Activated CD8-positive, alpha-beta T cell treated with anti-CD3 and anti-CD28 coated beads for 36 hours (primary cell): ENCODE measurements at regions of chr9 and their contacts with region 1.

Region 1: GRCh38 chr9:4984621-4985385 is at the start of gene JAK2:
- DNase-seq: peak; percentile 90
- ATAC-seq: peak; percentile 83
- H3K4me3 Mint-ChIP-seq: no peak within 1 kb of the TSS
- H3K27ac Mint-ChIP-seq: peak within 1 kb of the TSS; percentile 91
- H3K4me1 Mint-ChIP-seq: peaks cover 42% of the 10 kb centered on the region
- H3K27me3 Mint-ChIP-seq: no peaks in the 10 kb centered on the region
- CTCF ChIP-seq: peak; percentile 28
- total RNA-seq, gene JAK2: 28.4 to 29.0 TPM

Region 2: DNA sequence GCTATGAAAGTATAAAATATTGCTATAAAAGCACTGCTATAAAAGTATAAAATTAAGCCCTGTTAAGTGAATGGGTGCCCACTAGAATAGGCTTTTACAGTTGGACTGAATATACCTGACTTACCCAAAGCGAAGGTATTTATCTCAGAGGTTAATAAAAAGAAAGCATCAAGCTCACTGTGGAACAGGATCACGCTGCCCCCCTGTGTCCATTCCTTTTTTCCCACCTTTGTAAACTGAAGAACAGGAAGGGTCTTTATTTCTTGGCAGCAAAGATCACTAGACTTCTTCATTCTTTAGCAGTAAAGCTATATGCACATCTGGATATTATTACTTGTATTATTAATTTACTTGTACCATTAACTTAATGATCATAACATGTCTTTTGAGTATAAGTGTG is 344.8 kb before region 1 on chr9:
- CTCF ChIA-PET with region 1: no interaction called
- POLR2A ChIA-PET with region 1: no interaction called
- intact Hi-C with region 1: no loop called
- DNase-seq: peak; percentile 77
- ATAC-seq: peak; percentile 39
- H3K4me3 Mint-ChIP-seq: no peak overlapping the region
- H3K27ac Mint-ChIP-seq: no peak overlapping the region
- H3K4me1 Mint-ChIP-seq: peaks cover 4% of the 10 kb centered on the region
- H3K27me3 Mint-ChIP-seq: no peaks in the 10 kb centered on the region
- CTCF ChIP-seq: peak; percentile 53

Region 3: GRCh38 chr9:4679268-4680172 is 305.3 kb before region 1 on chr9 and contains the start of gene CDC37L1:
- CTCF ChIA-PET with region 1: no interaction called
- POLR2A ChIA-PET with region 1: no interaction called
- intact Hi-C with region 1: loop called (anchors 5 kb)
- DNase-seq: peak; percentile 99
- ATAC-seq: peak; percentile 97
- H3K4me3 Mint-ChIP-seq: no peak within 1 kb of the TSS
- H3K27ac Mint-ChIP-seq: no peak within 1 kb of the TSS
- H3K4me1 Mint-ChIP-seq: peaks cover 11% of the 10 kb centered on the region
- H3K27me3 Mint-ChIP-seq: no peaks in the 10 kb centered on the region
- CTCF ChIP-seq: peak; percentile 79
- total RNA-seq, gene CDC37L1: 10.0 to 10.2 TPM

Region 4: DNA sequence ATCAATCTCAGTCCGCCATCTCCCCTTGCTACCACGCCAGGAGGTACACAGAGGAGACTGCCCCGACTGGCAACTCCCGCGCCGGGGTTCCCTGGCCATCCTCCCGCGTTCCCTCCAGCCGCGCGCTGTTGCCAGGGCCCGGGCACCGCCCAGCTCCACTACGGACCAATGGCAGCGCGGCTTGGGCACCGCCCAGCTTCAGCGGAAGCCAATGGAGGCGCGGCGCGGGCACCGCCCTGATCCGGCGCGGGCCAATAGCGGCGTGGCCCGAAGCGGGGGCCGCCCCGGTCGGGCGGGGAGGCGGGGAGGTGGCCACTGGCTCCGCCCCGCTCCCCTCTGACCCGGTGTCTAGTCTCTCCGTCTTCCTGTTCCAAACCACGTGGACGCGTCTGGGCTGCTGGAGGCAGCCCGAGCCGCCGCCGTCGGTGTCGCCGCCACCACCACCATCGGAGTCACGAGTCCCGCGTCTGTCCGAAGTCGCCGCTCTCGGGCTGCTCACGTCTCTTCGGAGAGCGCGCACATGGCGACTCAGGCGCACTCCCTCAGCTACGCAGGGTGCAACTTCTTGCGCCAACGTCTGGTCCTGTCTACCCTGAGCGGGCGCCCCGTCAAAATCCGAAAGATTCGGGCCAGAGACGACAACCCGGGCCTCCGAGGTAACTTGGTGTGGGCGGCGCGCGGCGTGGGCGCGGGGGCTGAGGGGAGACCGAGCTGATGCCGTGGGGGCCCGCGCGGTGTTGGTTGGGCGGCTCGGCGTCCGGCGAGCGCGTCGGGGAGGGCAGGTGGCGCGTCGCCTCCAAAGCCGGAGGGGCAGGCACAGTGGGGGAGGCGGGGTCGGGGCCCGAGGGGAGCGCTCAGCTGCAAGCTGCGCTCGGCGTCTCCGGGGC is 192.0 kb before region 1 on chr9 and contains the start of gene RCL1:
- CTCF ChIA-PET with region 1: interaction called, 14 read pairs
- POLR2A ChIA-PET with region 1: interaction called, 12 read pairs
- intact Hi-C with region 1: no loop called
- DNase-seq: peak; percentile 96
- ATAC-seq: peak; percentile 94
- H3K4me3 Mint-ChIP-seq: peak within 1 kb of the TSS; percentile 96
- H3K27ac Mint-ChIP-seq: peak within 1 kb of the TSS; percentile 95
- H3K4me1 Mint-ChIP-seq: peaks cover 48% of the 10 kb centered on the region
- H3K27me3 Mint-ChIP-seq: peaks cover under 1% of the 10 kb centered on the region
- CTCF ChIP-seq: no peak
- total RNA-seq, gene RCL1: 24.5 to 28.6 TPM

Region 5: DNA sequence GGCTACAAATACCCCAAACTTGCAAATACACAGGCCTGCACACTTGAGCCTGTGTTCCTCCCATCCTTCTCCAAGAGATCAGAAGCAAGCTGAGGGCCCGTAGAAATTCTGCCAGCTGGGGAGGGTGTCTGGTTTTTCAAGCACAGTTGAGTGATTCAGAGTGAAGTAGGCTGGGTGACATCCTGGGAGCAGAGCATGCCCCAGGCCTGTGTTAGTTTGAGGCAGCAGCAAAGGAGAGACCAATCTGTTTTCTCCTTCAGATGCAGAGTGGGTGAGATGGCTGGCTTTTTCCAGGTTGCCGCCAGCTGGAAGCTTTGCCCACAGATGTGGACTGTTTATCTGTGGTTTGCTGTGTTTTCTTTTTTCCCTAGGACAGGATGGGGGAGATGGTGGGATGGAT is 129.0 kb before region 1 on chr9:
- CTCF ChIA-PET with region 1: interaction called, 17 read pairs
- POLR2A ChIA-PET with region 1: no interaction called
- intact Hi-C with region 1: no loop called
- DNase-seq: no peak
- ATAC-seq: no peak
- H3K4me3 Mint-ChIP-seq: no peak overlapping the region
- H3K27ac Mint-ChIP-seq: peak overlapping the region; percentile 39
- H3K4me1 Mint-ChIP-seq: peaks cover 24% of the 10 kb centered on the region
- H3K27me3 Mint-ChIP-seq: no peaks in the 10 kb centered on the region
- CTCF ChIP-seq: no peak

Region 6: GRCh38 chr9:4933177-4933576 is 51.6 kb before region 1 on chr9:
- CTCF ChIA-PET with region 1: interaction called, 10 read pairs
- POLR2A ChIA-PET with region 1: interaction called, 17 read pairs
- intact Hi-C with region 1: no loop called
- DNase-seq: no peak
- ATAC-seq: no peak
- H3K4me3 Mint-ChIP-seq: no peak overlapping the region
- H3K27ac Mint-ChIP-seq: no peak overlapping the region
- H3K4me1 Mint-ChIP-seq: peaks cover 28% of the 10 kb centered on the region
- H3K27me3 Mint-ChIP-seq: no peaks in the 10 kb centered on the region
- CTCF ChIP-seq: no peak

Region 7: GRCh38 chr9:4970970-4971641 is 13.7 kb before region 1 on chr9:
- CTCF ChIA-PET with region 1: interaction called, 11 read pairs
- POLR2A ChIA-PET with region 1: interaction called, 26 read pairs
- intact Hi-C with region 1: loop called (anchors 2 kb)
- DNase-seq: peak; percentile 89
- ATAC-seq: peak; percentile 86
- H3K4me3 Mint-ChIP-seq: no peak overlapping the region
- H3K27ac Mint-ChIP-seq: no peak overlapping the region
- H3K4me1 Mint-ChIP-seq: peaks cover 30% of the 10 kb centered on the region
- H3K27me3 Mint-ChIP-seq: no peaks in the 10 kb centered on the region
- CTCF ChIP-seq: no peak

Region 8: GRCh38 chr9:5089737-5090136 is 104.9 kb after region 1 on chr9:
- CTCF ChIA-PET with region 1: no interaction called
- POLR2A ChIA-PET with region 1: no interaction called
- intact Hi-C with region 1: no loop called
- DNase-seq: no peak
- ATAC-seq: no peak
- H3K4me3 Mint-ChIP-seq: no peak overlapping the region
- H3K27ac Mint-ChIP-seq: no peak overlapping the region
- H3K4me1 Mint-ChIP-seq: no peaks in the 10 kb centered on the region
- H3K27me3 Mint-ChIP-seq: no peaks in the 10 kb centered on the region
- CTCF ChIP-seq: no peak